MCF 10A (cell line): ENCODE measurements at regions of chr1 and their contacts with region 1.

Region 1: GRCh38 chr1:198560093-198560638 is 19.7 kb upstream of the ATP6V1G3 start:
- DNase-seq: peak; percentile 81
- H3K4me3 Mint-ChIP-seq: no peak overlapping the region
- H3K27ac Mint-ChIP-seq: no peak overlapping the region
- H3K4me1 Mint-ChIP-seq: peaks cover 19% of the 10 kb centered on the region
- H3K27me3 Mint-ChIP-seq: no peaks in the 10 kb centered on the region
- CTCF ChIP-seq: no peak

Region 2: DNA sequence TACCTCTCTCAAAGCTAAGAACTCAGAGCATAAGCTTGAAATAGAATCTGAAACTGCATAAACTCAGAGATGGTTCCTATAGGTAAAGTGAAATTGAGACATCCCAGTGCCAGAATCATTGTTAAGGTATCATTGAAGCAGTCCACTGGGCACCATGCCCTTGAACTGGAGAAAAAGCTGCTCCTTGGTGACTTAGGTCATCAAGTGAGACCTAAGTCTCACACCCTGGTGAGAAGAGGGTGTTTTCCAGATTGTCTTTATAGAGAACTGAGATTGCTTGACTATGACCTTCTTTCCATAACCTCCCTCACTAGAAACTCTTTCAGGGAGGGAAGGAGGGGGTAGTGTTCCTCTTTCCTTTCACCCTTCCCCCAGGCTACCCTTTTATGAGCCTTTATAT is 10.3 kb before region 1 on chr1:
- CTCF ChIA-PET with region 1: no interaction called
- POLR2A ChIA-PET with region 1: interaction called, 16 read pairs
- intact Hi-C with region 1: no loop called
- DNase-seq: no peak
- H3K4me3 Mint-ChIP-seq: no peak overlapping the region
- H3K27ac Mint-ChIP-seq: no peak overlapping the region
- H3K4me1 Mint-ChIP-seq: no peaks in the 10 kb centered on the region
- H3K27me3 Mint-ChIP-seq: no peaks in the 10 kb centered on the region
- CTCF ChIP-seq: no peak

Region 3: DNA sequence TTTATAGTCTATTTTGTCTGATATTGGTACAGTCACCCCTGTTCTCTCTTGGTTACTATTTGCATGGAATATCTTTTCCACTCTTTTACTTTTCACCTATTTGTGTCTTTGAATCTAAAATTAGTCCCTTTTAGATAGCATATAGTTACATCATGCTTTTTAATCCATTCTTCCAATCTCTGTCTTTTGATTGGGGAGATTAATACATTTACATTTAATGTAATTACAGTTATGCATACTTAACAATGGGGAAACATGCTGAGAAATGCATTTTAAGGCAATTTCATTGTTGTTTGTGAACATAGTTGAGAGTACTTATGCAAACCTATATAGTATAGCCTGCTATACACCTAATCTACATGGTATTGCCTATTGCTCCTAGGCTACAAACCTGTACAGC is 28.7 kb after region 1 on chr1:
- CTCF ChIA-PET with region 1: no interaction called
- POLR2A ChIA-PET with region 1: no interaction called
- intact Hi-C with region 1: no loop called
- DNase-seq: no peak
- H3K4me3 Mint-ChIP-seq: no peak overlapping the region
- H3K27ac Mint-ChIP-seq: no peak overlapping the region
- H3K4me1 Mint-ChIP-seq: no peaks in the 10 kb centered on the region
- H3K27me3 Mint-ChIP-seq: no peaks in the 10 kb centered on the region
- CTCF ChIP-seq: no peak